Ascending aorta (tissue), 2 donors: ENCODE measurements at regions of chr4 and their contacts with region 1.

Region 1: GRCh38 chr4:113445286-113445685 is 316.3 kb downstream of the CAMK2D start:
- DNase-seq: peak; percentile 30 to 89
- H3K4me3 ChIP-seq: no peak overlapping the region
- H3K27ac ChIP-seq: peak overlapping the region; percentile 79 to 86
- H3K4me1 ChIP-seq: peaks cover 0 to 27% of the 10 kb centered on the region in 2 donors
- H3K27me3 ChIP-seq: no peaks in the 10 kb centered on the region
- CTCF ChIP-seq: no peak

Region 2: DNA sequence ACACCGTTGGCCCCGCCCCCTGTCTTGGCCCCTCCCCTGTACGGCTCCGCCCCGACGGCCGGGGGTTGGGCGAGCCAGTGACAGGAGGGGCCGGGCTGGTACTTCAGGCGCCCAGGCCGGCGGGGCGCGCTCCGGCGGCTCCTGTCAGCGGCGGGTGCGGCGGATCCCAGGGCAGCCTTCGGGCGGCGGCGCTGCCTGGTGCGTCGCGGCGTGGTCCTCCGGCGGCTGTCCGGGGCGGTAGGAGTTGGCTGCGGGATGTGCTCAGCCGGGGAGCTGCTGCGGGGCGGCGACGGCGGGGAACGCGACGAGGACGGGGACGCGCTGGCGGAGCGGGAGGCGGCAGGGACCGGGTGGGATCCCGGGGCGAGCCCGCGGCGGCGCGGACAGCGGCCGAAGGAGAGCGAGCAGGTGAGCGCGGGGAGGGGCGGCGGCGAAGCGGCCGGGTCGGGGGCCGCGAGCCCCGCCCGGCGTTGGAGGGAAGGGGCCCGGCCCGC is 1299.9 kb before region 1 on chr4 and contains the start of gene FAM241A:
- intact Hi-C with region 1: no loop called
- DNase-seq: peak; percentile 62 to 94
- H3K4me3 ChIP-seq: peak within 1 kb of the TSS; percentile 76 to 96
- H3K27ac ChIP-seq: peak within 1 kb of the TSS; percentile 77 to 89
- H3K4me1 ChIP-seq: peaks cover 0 to 5% of the 10 kb centered on the region in 2 donors
- H3K27me3 ChIP-seq: no peaks in the 10 kb centered on the region
- CTCF ChIP-seq: no peak
- total RNA-seq, gene FAM241A: 6.8 TPM

Region 3: GRCh38 chr4:113468165-113469022 is 23.1 kb after region 1 on chr4:
- intact Hi-C with region 1: loop called (anchors 1 kb)
- DNase-seq: peak; percentile 91 to 98
- H3K4me3 ChIP-seq: peak overlapping the region in 1 of 2 donors; percentile 43
- H3K27ac ChIP-seq: peak overlapping the region; percentile 91 to 92
- H3K4me1 ChIP-seq: peaks cover 8 to 20% of the 10 kb centered on the region in 2 donors
- H3K27me3 ChIP-seq: no peaks in the 10 kb centered on the region
- CTCF ChIP-seq: no peak

Region 4: DNA sequence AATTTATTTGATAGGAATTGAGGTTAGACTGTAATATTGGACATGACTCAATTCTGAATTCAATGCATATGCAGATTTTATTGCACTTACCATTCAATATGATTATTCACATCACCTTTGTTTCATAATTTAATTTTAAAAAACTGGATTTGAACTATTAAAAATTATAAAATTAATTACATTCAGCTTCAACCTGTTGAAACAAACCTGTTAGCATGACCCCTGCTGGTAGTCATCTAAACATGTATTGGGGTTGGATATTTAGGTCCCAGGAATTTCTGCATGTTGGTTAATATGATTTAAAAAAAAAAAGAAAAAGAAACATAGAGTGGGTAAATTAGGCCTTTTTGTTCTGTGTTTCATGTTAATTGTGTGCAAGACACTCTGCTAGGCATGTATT is 448.3 kb after region 1 on chr4:
- intact Hi-C with region 1: no loop called
- DNase-seq: no peak
- H3K4me3 ChIP-seq: no peak overlapping the region
- H3K27ac ChIP-seq: no peak overlapping the region
- H3K4me1 ChIP-seq: no peaks in the 10 kb centered on the region
- H3K27me3 ChIP-seq: no peaks in the 10 kb centered on the region
- CTCF ChIP-seq: no peak

Region 5: GRCh38 chr4:114272226-114272625 is 826.9 kb after region 1 on chr4:
- intact Hi-C with region 1: loop called (anchors 10 kb)
- DNase-seq: no peak
- H3K4me3 ChIP-seq: no peak overlapping the region
- H3K27ac ChIP-seq: peak overlapping the region; percentile 22 to 65
- H3K4me1 ChIP-seq: peaks cover 0 to 7% of the 10 kb centered on the region in 2 donors
- H3K27me3 ChIP-seq: no peaks in the 10 kb centered on the region
- CTCF ChIP-seq: no peak